Naive thymus-derived CD8-positive, alpha-beta T cell (primary cell): ENCODE measurements at regions of chr13 and their contacts with region 1.

Region 1: GRCh38 chr13:41284512-41285288 is 21.3 kb upstream of the MTRF1 start:
- DNase-seq: no peak
- ATAC-seq: no peak
- H3K4me3 Mint-ChIP-seq: peak overlapping the region in 2 of 10 donors; percentile 69 to 73
- H3K27ac Mint-ChIP-seq: peak overlapping the region in 7 of 10 donors; percentile 16 to 93 (median 81)
- H3K4me1 Mint-ChIP-seq: peaks cover 15 to 72% (median 44%) of the 10 kb centered on the region in 4 donors
- H3K27me3 Mint-ChIP-seq: no peaks in the 10 kb centered on the region

Region 2: DNA sequence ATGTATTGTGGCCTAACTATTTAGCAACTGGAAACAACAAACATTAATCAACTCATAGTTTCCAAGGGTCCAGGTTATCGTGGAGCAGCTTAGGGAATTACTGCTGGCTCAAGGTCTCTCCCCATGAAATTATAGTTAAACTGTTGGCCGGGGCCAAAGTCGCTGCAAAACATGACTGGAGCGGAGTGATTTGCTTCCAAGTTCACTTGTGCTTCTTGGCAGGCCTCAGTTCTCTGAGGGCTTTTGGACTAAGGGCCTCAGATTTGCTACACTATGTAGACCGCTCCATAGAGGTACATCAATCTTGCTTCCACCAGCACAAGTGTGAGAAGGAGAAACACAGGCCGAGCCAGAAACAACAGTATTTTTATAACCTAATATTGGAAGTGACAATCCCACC is 80.9 kb before region 1 on chr13:
- POLR2A ChIA-PET with region 1: no interaction called
- DNase-seq: no peak
- ATAC-seq: no peak
- H3K4me3 Mint-ChIP-seq: no peak overlapping the region
- H3K27ac Mint-ChIP-seq: no peak overlapping the region
- H3K4me1 Mint-ChIP-seq: peaks cover 0 to 11% (median 0%) of the 10 kb centered on the region in 4 donors
- H3K27me3 Mint-ChIP-seq: no peaks in the 10 kb centered on the region

Region 3: DNA sequence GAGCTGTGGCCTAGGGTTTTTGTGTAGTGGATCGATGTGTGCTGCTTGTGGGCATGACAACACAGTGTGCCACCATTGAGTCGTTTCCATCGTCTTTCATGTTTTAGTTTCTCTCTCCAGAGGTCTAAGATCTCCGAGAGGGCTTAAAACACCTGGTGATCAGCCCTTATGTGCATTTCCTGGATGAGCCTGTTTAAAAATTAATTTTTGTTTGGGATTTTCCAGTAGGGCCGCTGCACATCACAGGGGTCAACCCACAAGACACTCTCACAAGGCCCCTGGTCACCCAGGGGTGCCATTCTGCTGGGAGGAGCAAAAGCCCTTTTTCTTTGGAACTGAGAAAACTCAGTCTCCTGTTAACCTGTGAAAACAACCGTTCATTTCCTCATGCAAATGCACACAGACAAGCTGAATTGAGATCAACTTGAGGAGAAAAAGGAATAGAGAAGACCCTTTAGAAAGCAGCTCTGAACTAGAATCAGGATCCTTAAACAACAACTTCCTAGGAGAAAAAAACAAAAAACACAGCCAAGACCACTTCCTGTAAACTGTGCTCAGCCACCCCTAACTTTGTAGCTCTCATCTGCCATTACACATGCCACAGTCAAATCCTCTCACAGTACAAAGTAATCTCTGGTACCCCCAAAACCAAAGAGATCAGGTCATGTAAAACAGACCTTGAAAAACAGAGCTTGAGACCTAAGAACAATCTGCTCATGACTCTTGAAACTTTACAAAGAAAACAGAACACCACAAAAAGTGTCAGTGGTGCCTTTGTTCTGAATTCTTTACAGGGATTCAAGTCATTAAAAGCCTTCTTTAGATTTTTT is 13.0 kb before region 1 on chr13:
- POLR2A ChIA-PET with region 1: interaction called, 19 read pairs
- DNase-seq: peak in 8 of 10 donors; percentile 8 to 87 (median 61)
- ATAC-seq: peak; percentile 87 to 88
- H3K4me3 Mint-ChIP-seq: peak overlapping the region; percentile 52 to 81 (median 69)
- H3K27ac Mint-ChIP-seq: peak overlapping the region; percentile 90 to 98 (median 96)
- H3K4me1 Mint-ChIP-seq: peaks cover 10 to 55% (median 36%) of the 10 kb centered on the region in 4 donors
- H3K27me3 Mint-ChIP-seq: no peaks in the 10 kb centered on the region

Region 4: DNA sequence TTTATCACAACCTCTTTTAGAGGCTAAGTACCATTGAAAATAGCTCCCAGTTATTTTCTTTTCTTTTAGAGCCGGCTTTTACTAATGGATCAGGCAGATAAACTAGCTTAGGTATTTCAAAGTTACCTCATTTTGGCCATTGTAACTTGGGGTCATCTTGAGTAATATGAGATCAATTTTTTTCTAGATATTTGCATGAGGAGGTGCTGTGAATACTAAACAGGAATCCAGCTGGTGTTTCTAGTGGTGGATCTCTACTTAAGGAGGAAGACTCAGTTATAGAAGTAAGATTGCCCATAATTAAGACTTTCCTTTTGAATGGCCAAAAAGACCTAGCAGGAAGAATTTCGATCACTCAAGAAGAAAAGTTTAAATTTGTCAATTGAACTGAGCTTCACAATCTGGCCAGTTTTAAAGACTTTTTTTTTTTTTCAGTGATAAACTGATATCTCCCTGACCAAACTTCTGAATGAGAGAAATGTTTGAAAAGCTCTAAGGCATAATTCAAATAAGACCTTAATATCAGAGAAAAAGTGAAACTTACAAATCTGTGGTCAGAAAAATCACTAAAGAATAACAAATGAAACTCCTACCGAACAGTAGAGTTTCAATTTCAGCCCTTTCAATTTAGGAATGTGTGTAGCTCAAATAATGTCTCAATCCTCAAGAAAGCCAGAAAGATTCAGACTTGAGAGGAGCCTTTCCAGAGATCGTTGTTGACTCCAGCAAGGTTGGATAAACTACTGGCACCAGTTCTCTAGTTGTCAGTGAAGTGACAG is 14.8 kb after region 1 on chr13:
- POLR2A ChIA-PET with region 1: interaction called, 12 read pairs
- DNase-seq: no peak
- ATAC-seq: no peak
- H3K4me3 Mint-ChIP-seq: no peak overlapping the region
- H3K27ac Mint-ChIP-seq: peak overlapping the region in 1 of 10 donors; percentile 9
- H3K4me1 Mint-ChIP-seq: peaks cover 6 to 18% (median 13%) of the 10 kb centered on the region in 4 donors
- H3K27me3 Mint-ChIP-seq: no peaks in the 10 kb centered on the region